ENCODE measurements at regions of chr9 and their contacts with region 1.

Region 1: DNA sequence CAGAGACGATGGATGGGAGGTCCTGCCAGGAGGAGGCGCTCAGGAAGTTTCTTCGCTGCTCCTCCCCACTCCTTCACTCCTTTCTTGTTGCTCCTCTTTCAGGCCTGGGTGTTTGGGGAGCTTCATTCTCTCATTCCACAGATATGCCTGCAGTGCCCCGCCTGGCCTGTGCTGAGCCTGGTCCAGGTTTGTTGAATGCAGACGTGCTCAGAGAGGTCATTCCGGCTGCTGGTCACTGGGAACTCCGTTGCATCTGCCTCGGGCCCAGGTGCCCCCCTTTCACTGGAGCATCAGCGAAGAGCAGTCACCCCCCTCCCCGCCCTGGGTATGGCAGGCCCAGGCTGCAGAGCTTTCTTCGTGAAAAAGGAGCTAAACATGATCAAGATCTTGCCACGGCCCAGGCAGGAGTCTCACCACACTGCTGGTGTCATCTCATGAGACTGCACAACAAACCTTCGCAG is 15.5 kb downstream of the SURF6 start:
- DNase-seq: no peak
- H3K4me3 ChIP-seq: no peak overlapping the region
- H3K4me1 ChIP-seq: no peaks in the 10 kb centered on the region
- H3K27me3 ChIP-seq: no peaks in the 10 kb centered on the region

Region 2: DNA sequence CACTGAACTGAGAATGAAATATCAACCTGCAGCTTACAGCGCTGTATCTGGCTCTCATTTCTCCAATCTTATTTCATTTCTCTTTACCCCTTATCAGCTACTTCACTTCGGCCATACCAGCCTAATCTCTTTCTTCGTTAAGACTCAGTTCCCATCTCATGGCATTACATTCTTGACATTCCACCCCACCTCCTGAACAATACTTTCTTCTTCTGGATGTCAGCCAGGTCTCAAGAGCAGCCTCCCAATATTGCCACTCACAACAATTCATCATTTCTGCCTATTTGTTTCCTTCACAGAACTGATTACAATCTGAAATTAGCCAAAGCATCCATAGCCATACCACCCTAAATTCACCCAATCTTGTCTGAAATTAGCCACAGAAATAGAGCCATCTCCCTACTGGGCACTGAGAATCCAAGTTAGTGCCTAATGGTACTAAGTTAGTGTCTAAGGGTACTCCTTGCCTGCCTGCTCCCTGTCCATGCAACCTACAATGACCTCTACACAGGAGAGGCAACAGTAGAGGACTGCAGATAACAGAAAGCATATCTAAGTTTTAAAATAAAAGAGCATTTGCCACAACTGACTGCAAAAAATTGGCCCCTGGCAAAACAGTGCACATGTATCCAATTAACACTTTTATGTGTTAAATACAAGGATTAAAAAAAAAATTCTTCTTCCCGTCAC is 1000.9 kb before region 1 on chr9:
- in situ Hi-C with region 1: no loop called
- DNase-seq: peak; percentile 42 to 76
- H3K4me3 ChIP-seq: no peak overlapping the region
- H3K4me1 ChIP-seq: peaks cover 10% of the 10 kb centered on the region
- H3K27me3 ChIP-seq: no peaks in the 10 kb centered on the region

Region 3: DNA sequence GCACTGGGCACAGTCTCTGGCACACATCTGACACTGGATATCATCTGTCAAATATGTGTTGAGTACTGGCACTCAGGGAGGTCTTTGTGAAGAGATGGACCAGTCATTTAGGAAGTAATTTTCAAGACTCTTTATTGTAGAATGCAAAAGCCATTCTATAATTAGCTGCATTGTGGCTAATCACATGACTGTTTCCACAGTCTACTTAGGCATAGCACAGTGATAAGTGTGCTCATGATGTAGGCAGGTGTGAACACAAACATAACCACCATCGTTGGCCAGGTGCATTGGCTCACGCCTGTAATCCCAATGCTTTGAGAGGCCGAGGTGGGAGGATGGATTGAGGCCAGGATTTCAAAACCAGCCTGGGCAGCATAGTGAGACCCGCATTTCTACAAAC is 848.3 kb before region 1 on chr9:
- in situ Hi-C with region 1: no loop called
- DNase-seq: no peak
- H3K4me3 ChIP-seq: no peak overlapping the region
- H3K4me1 ChIP-seq: peaks cover 7% of the 10 kb centered on the region
- H3K27me3 ChIP-seq: no peaks in the 10 kb centered on the region; the same call in 1 of the 2 replicates

Region 4: GRCh38 chr9:133184962-133185361 is 135.5 kb before region 1 on chr9:
- in situ Hi-C with region 1: loop called (anchors 10 kb)
- DNase-seq: peak; percentile 61 to 67
- H3K4me3 ChIP-seq: no peak overlapping the region
- H3K4me1 ChIP-seq: no peaks in the 10 kb centered on the region
- H3K27me3 ChIP-seq: peaks cover 15% of the 10 kb centered on the region

Region 5: DNA sequence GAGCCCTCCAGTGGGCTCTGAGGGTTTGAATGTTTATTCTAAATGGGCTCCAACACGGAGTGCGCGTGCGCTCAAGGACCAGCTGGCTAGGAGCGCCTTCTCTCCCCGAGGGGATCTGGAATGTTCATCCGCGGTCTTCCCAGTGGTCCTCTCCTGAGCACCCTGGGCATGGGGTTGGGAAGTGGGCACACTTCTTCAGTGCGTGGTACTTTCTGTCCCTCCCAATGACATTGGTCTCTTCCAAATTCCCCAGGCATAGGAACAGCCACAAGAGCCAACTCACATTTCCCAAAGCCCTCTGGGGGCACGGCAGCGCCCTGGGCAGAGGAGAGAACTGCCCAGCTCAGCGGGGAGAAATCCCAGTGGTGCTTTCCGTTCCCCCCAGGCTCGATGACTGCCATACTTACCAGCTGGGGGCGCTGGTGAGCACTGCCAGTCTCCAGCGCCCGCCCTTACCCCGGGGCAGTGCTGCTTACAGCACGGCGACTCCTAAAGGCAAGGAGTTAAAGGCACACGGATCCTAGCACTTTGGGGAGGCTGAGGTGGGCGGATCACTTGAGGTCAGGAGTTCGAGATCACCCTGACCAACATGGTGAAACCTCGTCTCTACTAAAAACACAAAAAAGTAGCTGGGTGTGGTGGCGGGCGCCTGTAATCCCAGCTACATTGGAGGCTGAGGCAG is 81.5 kb before region 1 on chr9:
- in situ Hi-C with region 1: loop called (anchors 10 kb)
- DNase-seq: peak; percentile 55 to 88
- H3K4me3 ChIP-seq: peak overlapping the region; percentile 13
- H3K4me1 ChIP-seq: peaks cover 11% of the 10 kb centered on the region
- H3K27me3 ChIP-seq: no peaks in the 10 kb centered on the region

Region 6: GRCh38 chr9:133275105-133276000 is 45.1 kb before region 1 on chr9 and contains the start of gene ABO:
- in situ Hi-C with region 1: no loop called
- DNase-seq: no peak
- H3K4me3 ChIP-seq: no peak within 1 kb of the TSS; the same call in 1 of the 2 replicates
- H3K4me1 ChIP-seq: no peaks in the 10 kb centered on the region
- H3K27me3 ChIP-seq: peaks cover 53% of the 10 kb centered on the region

Measured in HAP-1 (cell line).